Breast epithelium (tissue), 4 donors: ENCODE measurements at regions of chr16 and their contacts with region 1.

Region 1: GRCh38 chr16:29900102-29900887 is at the start of gene ASPHD1:
- DNase-seq: peak in 1 of 2 donors; percentile 26
- H3K4me3 ChIP-seq: peak within 1 kb of the TSS; percentile 45 to 73 (median 70)
- H3K27ac ChIP-seq: peak within 1 kb of the TSS; percentile 64 to 73
- H3K4me1 ChIP-seq: no peaks in the 10 kb centered on the region
- H3K27me3 ChIP-seq: peaks cover 0 to 10% of the 10 kb centered on the region in 2 donors
- CTCF ChIP-seq: no peak
- POLR2A ChIP-seq: no peak
- total RNA-seq, gene ASPHD1: 1.3 to 2.5 TPM in 2 of 3 donors, not detected in the other

Region 2: DNA sequence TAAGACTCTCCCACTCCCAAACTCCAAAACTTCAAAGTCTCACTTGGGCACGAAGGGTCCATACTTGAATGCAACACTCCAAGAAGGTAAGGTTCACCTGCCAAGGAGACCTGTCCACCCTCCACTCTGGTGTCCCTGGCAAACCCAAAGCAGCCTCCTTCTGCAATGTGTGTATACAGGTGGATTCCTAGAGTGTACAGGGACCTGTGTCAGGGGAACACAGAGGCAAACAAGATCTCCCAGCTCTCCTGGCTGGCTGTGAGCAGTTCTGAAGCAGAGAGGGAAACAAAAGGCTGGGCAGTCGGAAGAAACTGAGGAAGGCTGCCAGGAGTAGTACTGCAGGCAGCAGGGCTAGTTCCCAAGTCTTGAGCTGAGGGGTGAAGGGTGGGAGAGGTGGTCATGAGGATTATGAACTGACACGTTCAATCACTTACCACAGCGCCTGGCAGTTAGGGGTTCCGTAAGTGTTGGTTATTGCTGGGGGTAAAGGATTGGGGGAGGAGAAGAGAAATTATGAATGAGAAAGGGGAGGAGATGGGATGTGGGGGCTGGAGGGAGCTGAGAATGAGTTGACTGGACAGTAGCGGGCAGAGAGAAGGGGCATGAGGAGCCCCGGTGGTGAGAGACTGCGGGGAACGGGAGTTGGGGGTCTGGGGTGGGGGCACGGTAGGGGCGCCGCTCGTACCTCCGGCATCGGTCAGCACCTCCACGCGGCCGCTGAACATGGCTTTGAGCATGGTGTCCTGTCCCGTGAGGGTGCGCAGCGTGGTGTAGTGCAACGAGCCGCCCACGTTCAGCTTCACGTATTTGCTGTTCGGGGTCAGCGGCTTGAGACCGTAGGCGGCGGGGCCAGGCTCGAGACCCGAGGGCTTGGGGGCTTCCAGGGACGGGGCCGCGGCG is 25.1 kb after region 1 on chr16:
- intact Hi-C with region 1: loop called (anchors 1 kb)
- DNase-seq: peak in 1 of 2 donors; percentile 51
- H3K4me3 ChIP-seq: peak overlapping the region; percentile 72 to 99 (median 90)
- H3K27ac ChIP-seq: peak overlapping the region; percentile 86 to 89
- H3K4me1 ChIP-seq: peaks cover 0 to 10% of the 10 kb centered on the region in 2 donors
- H3K27me3 ChIP-seq: no peaks in the 10 kb centered on the region
- CTCF ChIP-seq: no peak
- POLR2A ChIP-seq: no peak

Region 3: GRCh38 chr16:31767267-31767666 is 1867.0 kb after region 1 on chr16:
- intact Hi-C with region 1: loop called (anchors 10 kb)
- DNase-seq: no peak
- H3K4me3 ChIP-seq: no peak overlapping the region
- H3K27ac ChIP-seq: no peak overlapping the region
- H3K4me1 ChIP-seq: no peaks in the 10 kb centered on the region
- H3K27me3 ChIP-seq: no peaks in the 10 kb centered on the region
- CTCF ChIP-seq: no peak
- POLR2A ChIP-seq: no peak